CD4-positive, alpha-beta memory T cell (primary cell): ENCODE measurements at regions of chr12 and their contacts with region 1.

Region 1: DNA sequence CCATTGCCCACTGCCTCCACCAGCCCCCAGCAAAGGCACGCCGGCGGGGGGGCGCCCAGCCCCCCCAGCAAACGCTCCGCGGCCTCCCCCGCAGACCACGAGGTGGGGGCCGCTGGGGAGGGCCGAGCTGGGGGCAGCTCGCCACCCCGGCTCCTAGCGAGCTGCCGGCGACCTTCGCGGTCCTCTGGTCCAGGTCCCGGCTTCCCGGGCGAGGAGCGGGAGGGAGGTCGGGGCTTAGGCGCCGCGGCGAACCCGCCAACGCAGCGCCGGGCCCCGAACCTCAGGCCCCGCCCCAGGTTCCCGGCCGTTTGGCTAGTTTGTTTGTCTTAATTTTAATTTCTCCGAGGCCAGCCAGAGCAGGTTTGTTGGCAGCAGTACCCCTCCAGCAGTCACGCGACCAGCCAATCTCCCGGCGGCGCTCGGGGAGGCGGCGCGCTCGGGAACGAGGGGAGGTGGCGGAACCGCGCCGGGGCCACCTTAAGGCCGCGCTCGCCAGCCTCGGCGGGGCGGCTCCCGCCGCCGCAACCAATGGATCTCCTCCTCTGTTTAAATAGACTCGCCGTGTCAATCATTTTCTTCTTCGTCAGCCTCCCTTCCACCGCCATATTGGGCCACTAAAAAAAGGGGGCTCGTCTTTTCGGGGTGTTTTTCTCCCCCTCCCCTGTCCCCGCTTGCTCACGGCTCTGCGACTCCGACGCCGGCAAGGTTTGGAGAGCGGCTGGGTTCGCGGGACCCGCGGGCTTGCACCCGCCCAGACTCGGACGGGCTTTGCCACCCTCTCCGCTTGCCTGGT is at the start of gene CDKN1B:
- DNase-seq: peak; percentile 87 to 90 (median 89)
- H3K4me3 ChIP-seq: peak within 1 kb of the TSS; percentile 94 to 99
- H3K4me3 Mint-ChIP-seq: peak within 1 kb of the TSS; percentile 96 to 100 (median 98)
- H3K27ac ChIP-seq: peak within 1 kb of the TSS; percentile 95
- H3K27ac Mint-ChIP-seq: peak within 1 kb of the TSS; percentile 96 to 99 (median 98)
- H3K4me1 ChIP-seq: peaks cover 51% of the 10 kb centered on the region
- H3K4me1 Mint-ChIP-seq: peaks cover 38 to 63% (median 47%) of the 10 kb centered on the region in 4 donors
- H3K27me3 ChIP-seq: no peaks in the 10 kb centered on the region
- H3K27me3 Mint-ChIP-seq: no peaks in the 10 kb centered on the region
- total RNA-seq, gene CDKN1B: 232 to 238 TPM

Region 2: GRCh38 chr12:12384571-12385340 is 332.2 kb before region 1 on chr12:
- CTCF ChIA-PET with region 1: interaction called, 3 read pairs
- POLR2A ChIA-PET with region 1: interaction called, 60 read pairs
- intact Hi-C with region 1: no loop called
- DNase-seq: peak in 4 of 5 donors; percentile 46 to 48 (median 47)
- H3K4me3 ChIP-seq: peak overlapping the region in 1 of 2 donors; percentile 9
- H3K4me3 Mint-ChIP-seq: peak overlapping the region; percentile 59 to 85 (median 74)
- H3K27ac ChIP-seq: peak overlapping the region; percentile 50
- H3K27ac Mint-ChIP-seq: peak overlapping the region; percentile 86 to 99 (median 96)
- H3K4me1 ChIP-seq: peaks cover 87% of the 10 kb centered on the region
- H3K4me1 Mint-ChIP-seq: peaks cover 46 to 87% (median 68%) of the 10 kb centered on the region in 4 donors
- H3K27me3 ChIP-seq: no peaks in the 10 kb centered on the region
- H3K27me3 Mint-ChIP-seq: no peaks in the 10 kb centered on the region

Region 3: GRCh38 chr12:12645485-12645884 is 71.5 kb before region 1 on chr12:
- CTCF ChIA-PET with region 1: interaction called, 8 read pairs
- POLR2A ChIA-PET with region 1: interaction called, 6 read pairs
- intact Hi-C with region 1: loop called (anchors 1 kb)
- DNase-seq: peak; percentile 52 to 70 (median 65)
- H3K4me3 ChIP-seq: no peak overlapping the region
- H3K4me3 Mint-ChIP-seq: no peak overlapping the region
- H3K27ac ChIP-seq: no peak overlapping the region
- H3K27ac Mint-ChIP-seq: peak overlapping the region in 5 of 7 donors; percentile 36 to 77 (median 55)
- H3K4me1 ChIP-seq: no peaks in the 10 kb centered on the region
- H3K4me1 Mint-ChIP-seq: peaks cover 6 to 11% (median 7%) of the 10 kb centered on the region in 4 donors
- H3K27me3 ChIP-seq: no peaks in the 10 kb centered on the region
- H3K27me3 Mint-ChIP-seq: no peaks in the 10 kb centered on the region

Region 4: GRCh38 chr12:12696562-12697383 is 20.2 kb before region 1 on chr12:
- CTCF ChIA-PET with region 1: interaction called, 14 read pairs
- POLR2A ChIA-PET with region 1: interaction called, 1,446 read pairs
- intact Hi-C with region 1: loop called (anchors 1 kb)
- DNase-seq: peak; percentile 93 to 96 (median 95)
- H3K4me3 ChIP-seq: peak overlapping the region; percentile 37 to 74
- H3K4me3 Mint-ChIP-seq: peak overlapping the region; percentile 86 to 97 (median 94)
- H3K27ac ChIP-seq: peak overlapping the region; percentile 87
- H3K27ac Mint-ChIP-seq: peak overlapping the region; percentile 98 to 100 (median 100)
- H3K4me1 ChIP-seq: peaks cover 24% of the 10 kb centered on the region
- H3K4me1 Mint-ChIP-seq: peaks cover 16 to 41% (median 30%) of the 10 kb centered on the region in 4 donors
- H3K27me3 ChIP-seq: no peaks in the 10 kb centered on the region
- H3K27me3 Mint-ChIP-seq: no peaks in the 10 kb centered on the region

Region 5: DNA sequence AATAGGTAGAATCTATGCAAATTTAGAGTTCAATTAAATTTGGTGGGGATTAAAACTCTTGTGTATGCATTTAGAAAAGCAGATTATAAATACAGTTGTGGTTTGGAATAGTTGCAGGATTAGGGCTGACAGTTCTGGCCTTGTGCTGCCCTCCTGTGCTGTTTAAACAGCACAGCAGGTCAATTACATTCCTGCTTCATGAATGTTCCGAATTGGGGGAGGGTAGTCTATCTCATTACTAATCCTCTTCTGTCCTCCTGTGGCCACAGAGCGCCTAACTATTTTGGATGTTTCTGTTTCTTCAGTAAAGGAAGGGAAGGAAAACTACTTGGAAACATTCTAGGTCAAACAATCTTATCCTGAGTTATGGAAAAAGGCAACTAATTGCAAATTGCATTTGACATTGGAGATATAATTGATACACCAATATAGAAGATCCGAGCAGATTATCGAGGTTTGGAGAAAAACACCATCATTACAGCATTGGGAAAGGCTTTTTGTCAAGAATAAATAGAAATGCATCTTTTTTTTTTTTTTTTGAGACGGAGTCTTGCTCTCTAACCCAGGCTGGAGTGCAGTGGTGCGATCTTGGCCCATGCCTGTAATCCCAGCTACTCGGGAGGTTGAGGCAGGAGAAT is 12.3 kb before region 1 on chr12:
- CTCF ChIA-PET with region 1: interaction called, 14 read pairs
- POLR2A ChIA-PET with region 1: interaction called, 1,446 read pairs
- intact Hi-C with region 1: loop called (anchors 1 kb)
- DNase-seq: peak in 4 of 5 donors; percentile 36 to 58 (median 48)
- H3K4me3 ChIP-seq: no peak overlapping the region
- H3K4me3 Mint-ChIP-seq: peak overlapping the region in 6 of 8 donors; percentile 2 to 84 (median 36)
- H3K27ac ChIP-seq: no peak overlapping the region
- H3K27ac Mint-ChIP-seq: peak overlapping the region in 5 of 7 donors; percentile 50 to 88 (median 73)
- H3K4me1 ChIP-seq: peaks cover 37% of the 10 kb centered on the region
- H3K4me1 Mint-ChIP-seq: peaks cover 14 to 32% (median 20%) of the 10 kb centered on the region in 4 donors
- H3K27me3 ChIP-seq: no peaks in the 10 kb centered on the region
- H3K27me3 Mint-ChIP-seq: no peaks in the 10 kb centered on the region

Region 6: DNA sequence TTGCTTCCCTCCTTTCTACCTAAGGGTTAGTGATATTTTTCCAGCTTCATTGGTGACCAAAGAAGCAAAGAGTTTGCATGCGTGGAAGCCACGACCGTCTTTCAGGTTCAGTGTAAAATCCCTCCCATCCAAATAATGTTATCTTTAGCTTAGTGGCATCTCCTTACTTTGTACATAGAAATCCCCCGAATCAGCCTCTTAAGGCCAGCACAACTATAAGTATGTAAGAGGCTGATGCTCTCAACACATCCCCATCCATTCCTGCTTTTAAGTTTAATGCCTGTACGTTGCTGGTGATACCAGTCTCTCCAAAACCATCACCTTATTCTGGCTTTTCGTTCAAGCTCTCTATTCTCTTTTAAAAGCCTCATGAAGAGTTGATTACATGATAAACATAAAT is 14.8 kb after region 1 on chr12:
- CTCF ChIA-PET with region 1: interaction called, 104 read pairs
- POLR2A ChIA-PET with region 1: interaction called, 1,446 read pairs
- intact Hi-C with region 1: no loop called
- DNase-seq: no peak
- H3K4me3 ChIP-seq: no peak overlapping the region
- H3K4me3 Mint-ChIP-seq: no peak overlapping the region
- H3K27ac ChIP-seq: no peak overlapping the region
- H3K27ac Mint-ChIP-seq: peak overlapping the region in 6 of 7 donors; percentile 17 to 72 (median 32)
- H3K4me1 ChIP-seq: peaks cover 67% of the 10 kb centered on the region
- H3K4me1 Mint-ChIP-seq: peaks cover 37 to 68% (median 49%) of the 10 kb centered on the region in 4 donors
- H3K27me3 ChIP-seq: no peaks in the 10 kb centered on the region
- H3K27me3 Mint-ChIP-seq: no peaks in the 10 kb centered on the region

Region 7: DNA sequence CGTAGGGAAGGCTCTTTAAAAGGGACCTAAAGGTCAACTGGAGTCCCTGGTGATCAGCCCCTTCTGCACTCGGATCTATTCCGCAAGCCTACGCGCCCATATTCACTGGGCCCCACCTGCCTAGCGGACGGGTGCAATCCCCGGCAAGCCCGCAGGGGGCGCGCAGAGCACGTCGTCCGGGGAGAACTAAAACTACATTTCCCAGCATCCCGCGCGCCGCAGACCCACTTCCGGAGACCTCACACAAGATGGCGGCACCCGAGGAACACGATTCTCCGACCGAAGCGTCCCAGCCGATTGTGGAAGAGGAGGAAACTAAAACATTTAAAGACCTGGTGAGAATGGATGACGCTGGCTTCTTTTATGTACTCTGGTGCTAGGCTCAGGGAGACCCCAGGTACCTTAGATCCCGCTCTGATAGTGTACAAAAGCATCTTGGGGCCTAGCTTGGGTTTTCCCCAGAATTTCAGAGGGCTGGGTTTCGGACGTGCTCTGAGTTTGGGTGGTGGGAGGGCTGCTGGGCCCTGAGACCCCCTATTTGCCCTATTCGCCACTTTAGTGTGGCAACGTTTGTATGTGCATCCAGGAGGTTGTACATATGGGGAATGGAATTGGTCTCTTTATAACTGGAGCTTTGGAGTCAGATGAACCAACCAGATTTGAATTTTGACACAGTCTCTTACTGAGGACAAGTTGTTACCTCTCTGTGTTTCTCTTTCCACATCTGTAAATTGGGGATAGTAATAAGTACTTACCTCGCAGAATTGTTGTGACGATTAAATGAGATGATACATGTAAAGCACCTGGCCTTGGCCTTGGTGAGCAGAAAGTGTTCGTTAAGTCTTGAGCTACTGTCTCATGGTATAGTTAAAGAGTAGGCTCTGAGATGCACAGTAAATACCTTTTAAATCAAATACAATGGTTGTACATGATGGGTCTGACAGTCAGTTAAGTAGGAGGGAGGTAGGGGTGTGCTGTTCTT is 96.4 kb after region 1 on chr12 and contains the start of gene DDX47:
- CTCF ChIA-PET with region 1: no interaction called
- POLR2A ChIA-PET with region 1: interaction called, 5 read pairs
- intact Hi-C with region 1: loop called (anchors 1 kb)
- DNase-seq: peak; percentile 93 to 97 (median 95)
- H3K4me3 ChIP-seq: peak within 1 kb of the TSS; percentile 87 to 92
- H3K4me3 Mint-ChIP-seq: peak within 1 kb of the TSS; percentile 89 to 98 (median 98)
- H3K27ac ChIP-seq: peak within 1 kb of the TSS; percentile 95
- H3K27ac Mint-ChIP-seq: peak within 1 kb of the TSS; percentile 88 to 99 (median 98)
- H3K4me1 ChIP-seq: peaks cover 53% of the 10 kb centered on the region
- H3K4me1 Mint-ChIP-seq: peaks cover 41 to 76% (median 58%) of the 10 kb centered on the region in 4 donors
- H3K27me3 ChIP-seq: no peaks in the 10 kb centered on the region
- H3K27me3 Mint-ChIP-seq: no peaks in the 10 kb centered on the region
- total RNA-seq, gene DDX47: 66.5 to 66.6 TPM

Region 8: DNA sequence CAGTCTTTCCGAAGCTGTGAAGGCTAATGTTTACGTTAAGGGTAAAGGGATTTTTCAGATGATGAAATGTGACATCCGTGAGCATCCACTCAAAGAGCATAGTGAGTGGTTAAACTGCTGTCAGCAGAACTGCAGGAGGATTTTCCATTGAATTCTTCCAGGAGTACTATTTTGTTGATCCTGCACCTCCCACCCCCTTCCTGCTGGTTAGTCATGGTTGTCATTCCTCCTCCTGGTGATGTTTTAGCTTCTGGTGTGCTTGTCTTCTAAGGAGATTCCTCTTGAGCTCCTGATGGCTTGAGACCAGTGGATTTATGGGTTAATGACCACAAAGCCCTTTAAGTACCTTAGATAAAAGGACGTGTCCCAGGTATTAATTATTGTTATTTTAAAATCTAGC is 237.4 kb after region 1 on chr12:
- CTCF ChIA-PET with region 1: no interaction called
- POLR2A ChIA-PET with region 1: no interaction called
- intact Hi-C with region 1: no loop called
- DNase-seq: no peak
- H3K4me3 ChIP-seq: no peak overlapping the region
- H3K4me3 Mint-ChIP-seq: no peak overlapping the region
- H3K27ac ChIP-seq: no peak overlapping the region
- H3K27ac Mint-ChIP-seq: no peak overlapping the region
- H3K4me1 ChIP-seq: no peaks in the 10 kb centered on the region
- H3K4me1 Mint-ChIP-seq: no peaks in the 10 kb centered on the region
- H3K27me3 ChIP-seq: no peaks in the 10 kb centered on the region
- H3K27me3 Mint-ChIP-seq: peaks cover 6 to 8% of the 10 kb centered on the region in 2 donors